PC-9 (cell line): ENCODE measurements at regions of chr17 and their contacts with region 1.

Region 1: DNA sequence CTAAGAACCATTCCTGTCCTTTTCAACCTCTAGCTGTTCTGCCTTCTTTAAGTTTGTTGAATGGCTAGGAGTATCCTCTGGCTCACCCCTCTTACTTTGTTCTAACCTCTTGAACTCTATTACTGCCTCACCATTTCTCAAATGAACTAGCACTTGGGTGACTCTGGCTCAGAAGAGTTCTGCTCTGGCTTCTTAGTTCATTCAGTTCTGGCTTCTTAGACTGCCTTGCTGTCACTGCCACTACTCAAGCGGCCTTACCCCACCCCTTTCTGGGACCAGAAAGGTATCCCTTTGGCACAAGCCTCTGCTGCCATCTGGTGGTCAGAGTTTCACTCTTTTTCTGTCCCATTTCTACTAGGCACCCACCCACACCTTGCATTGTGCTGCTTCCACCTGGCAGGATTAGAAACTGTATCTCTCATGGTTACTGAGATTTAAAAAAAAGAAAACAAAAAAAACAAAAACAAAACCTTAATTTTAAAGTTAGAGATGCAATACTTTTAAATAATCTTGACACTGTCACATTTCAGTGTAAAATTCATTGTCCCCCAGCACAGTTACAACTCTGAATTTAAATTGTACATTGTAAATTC is 6.8 kb upstream of the ABCA10 start:
- DNase-seq: peak; percentile 56 to 76
- H3K4me3 ChIP-seq: no peak overlapping the region
- H3K27ac ChIP-seq: no peak overlapping the region
- H3K4me1 ChIP-seq: no peaks in the 10 kb centered on the region
- H3K27me3 ChIP-seq: no peaks in the 10 kb centered on the region
- CTCF ChIP-seq: peak; percentile 92

Region 2: GRCh38 chr17:68777243-68777855 is 458.1 kb before region 1 on chr17:
- CTCF ChIA-PET with region 1: interaction called, 4 read pairs
- POLR2A ChIA-PET with region 1: no interaction called
- intact Hi-C with region 1: loop called (anchors 1 kb)
- DNase-seq: peak in 1 of 2 experiments; percentile 39
- H3K4me3 ChIP-seq: no peak overlapping the region
- H3K27ac ChIP-seq: no peak overlapping the region
- H3K4me1 ChIP-seq: no peaks in the 10 kb centered on the region
- H3K27me3 ChIP-seq: no peaks in the 10 kb centered on the region
- CTCF ChIP-seq: peak; percentile 80

Region 3: GRCh38 chr17:69078864-69079263 is 156.6 kb before region 1 on chr17:
- CTCF ChIA-PET with region 1: no interaction called
- POLR2A ChIA-PET with region 1: no interaction called
- intact Hi-C with region 1: no loop called
- DNase-seq: no peak
- H3K4me3 ChIP-seq: no peak overlapping the region
- H3K27ac ChIP-seq: no peak overlapping the region
- H3K4me1 ChIP-seq: no peaks in the 10 kb centered on the region
- H3K27me3 ChIP-seq: no peaks in the 10 kb centered on the region
- CTCF ChIP-seq: no peak